Mammary epithelial cell (primary cell): ENCODE measurements at regions of chr11 and their contacts with region 1.

Region 1: DNA sequence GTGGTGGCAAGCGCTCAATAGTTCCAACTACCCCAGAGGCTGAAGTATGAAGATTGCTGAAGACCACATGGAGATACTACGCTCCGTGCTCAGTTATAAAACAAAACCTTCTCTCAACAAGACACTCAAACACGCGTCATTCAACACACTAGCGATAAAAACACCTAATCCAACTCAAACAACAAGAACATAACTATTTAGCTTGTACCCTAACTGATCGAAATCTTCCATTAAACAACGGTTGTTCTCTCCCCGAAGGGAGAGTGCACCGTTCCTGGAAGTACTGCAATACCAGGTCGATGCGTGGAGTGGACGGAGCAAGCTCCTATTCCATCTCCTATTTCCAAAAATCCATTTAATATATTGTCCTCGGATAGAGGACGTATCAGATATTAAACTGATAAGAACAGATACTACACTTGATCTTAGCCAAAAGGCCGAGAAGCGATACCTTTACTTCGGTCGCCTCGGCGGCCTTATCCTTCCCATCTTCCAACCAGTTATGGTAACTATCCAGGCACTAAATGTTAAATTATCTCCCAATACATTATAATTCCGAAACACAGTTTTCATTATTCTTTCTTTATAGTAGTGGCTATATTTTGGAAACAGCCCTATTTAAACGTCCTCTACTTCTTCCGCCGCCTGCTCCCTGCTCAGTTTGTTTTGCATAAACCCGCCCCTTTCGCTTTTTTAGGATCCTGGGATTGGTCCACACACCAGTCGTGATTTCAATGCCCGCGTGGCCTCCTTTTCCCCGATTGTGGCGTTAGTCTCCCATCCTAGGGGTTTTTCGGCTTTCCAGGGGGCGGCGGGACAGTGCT is 2.2 kb upstream of the WDR74 start:
- DNase-seq: peak; percentile 100
- H3K4me3 ChIP-seq: peak overlapping the region in 2 of 3 experiments; percentile 35 to 36
- H3K27ac ChIP-seq: peak overlapping the region; percentile 99
- H3K4me1 ChIP-seq: peaks cover 11% of the 10 kb centered on the region
- H3K27me3 ChIP-seq: no peaks in the 10 kb centered on the region
- CTCF ChIP-seq: no peak

Region 2: DNA sequence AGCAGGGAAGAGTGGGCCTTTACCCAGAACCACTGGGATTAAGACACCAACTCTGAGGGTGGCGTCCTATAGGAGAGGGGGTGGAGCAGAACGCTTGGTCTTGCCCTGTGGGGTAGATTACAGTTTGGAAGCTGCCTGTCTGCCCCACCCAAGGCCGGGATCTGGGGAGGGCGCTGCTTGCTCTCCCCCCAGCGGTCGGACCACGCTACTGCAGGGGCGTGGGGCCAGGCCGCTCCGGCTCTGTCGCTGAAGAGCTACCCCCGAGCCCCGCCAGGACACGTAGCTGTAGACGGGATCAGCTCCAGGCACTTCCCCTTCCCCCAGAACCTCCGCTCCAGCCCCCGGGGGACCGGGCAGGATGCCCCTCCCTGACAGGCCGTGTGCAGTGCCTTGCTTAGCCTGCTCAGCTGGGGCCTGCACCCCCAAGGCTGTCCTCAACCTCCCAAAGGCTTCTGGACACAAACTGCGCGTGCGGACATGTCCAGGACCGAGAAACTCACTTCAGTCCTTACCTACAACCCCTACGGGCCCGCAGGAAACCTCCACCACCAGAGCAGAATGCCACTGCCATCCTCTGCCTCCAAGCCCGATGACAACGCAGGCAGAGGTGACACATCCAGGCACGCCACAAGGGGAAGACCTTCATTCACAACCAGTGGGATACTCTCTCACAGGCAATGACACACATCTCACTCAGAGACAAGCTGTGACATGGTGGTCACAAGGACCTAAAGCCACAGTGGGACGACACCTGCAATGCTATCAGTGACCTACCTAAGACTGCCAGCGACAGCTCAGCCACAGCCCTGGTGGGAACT is 298.6 kb before region 1 on chr11:
- CTCF ChIA-PET with region 1: no interaction called
- dilution Hi-C with region 1: no loop called
- in situ Hi-C with region 1: no loop called
- intact Hi-C with region 1: loop called (anchors 2 kb)
- DNase-seq: peak; percentile 78
- H3K4me3 ChIP-seq: peak overlapping the region; percentile 82 to 99 (median 91)
- H3K27ac ChIP-seq: peak overlapping the region; percentile 86
- H3K4me1 ChIP-seq: peaks cover 59% of the 10 kb centered on the region
- H3K27me3 ChIP-seq: no peaks in the 10 kb centered on the region
- CTCF ChIP-seq: peak; percentile 78 to 98

Region 3: GRCh38 chr11:62726915-62727763 is 114.4 kb before region 1 on chr11 and contains the start of gene HNRNPUL2:
- CTCF ChIA-PET with region 1: no interaction called
- dilution Hi-C with region 1: no loop called
- in situ Hi-C with region 1: no loop called
- intact Hi-C with region 1: loop called (anchors 2 kb)
- DNase-seq: peak; percentile 99
- H3K4me3 ChIP-seq: peak within 1 kb of the TSS; percentile 89 to 96 (median 90)
- H3K27ac ChIP-seq: peak within 1 kb of the TSS; percentile 82
- H3K4me1 ChIP-seq: peaks cover 4% of the 10 kb centered on the region
- H3K27me3 ChIP-seq: no peaks in the 10 kb centered on the region
- CTCF ChIP-seq: no peak
- total RNA-seq, gene HNRNPUL2: 7.7 to 50.4 TPM

Region 4: DNA sequence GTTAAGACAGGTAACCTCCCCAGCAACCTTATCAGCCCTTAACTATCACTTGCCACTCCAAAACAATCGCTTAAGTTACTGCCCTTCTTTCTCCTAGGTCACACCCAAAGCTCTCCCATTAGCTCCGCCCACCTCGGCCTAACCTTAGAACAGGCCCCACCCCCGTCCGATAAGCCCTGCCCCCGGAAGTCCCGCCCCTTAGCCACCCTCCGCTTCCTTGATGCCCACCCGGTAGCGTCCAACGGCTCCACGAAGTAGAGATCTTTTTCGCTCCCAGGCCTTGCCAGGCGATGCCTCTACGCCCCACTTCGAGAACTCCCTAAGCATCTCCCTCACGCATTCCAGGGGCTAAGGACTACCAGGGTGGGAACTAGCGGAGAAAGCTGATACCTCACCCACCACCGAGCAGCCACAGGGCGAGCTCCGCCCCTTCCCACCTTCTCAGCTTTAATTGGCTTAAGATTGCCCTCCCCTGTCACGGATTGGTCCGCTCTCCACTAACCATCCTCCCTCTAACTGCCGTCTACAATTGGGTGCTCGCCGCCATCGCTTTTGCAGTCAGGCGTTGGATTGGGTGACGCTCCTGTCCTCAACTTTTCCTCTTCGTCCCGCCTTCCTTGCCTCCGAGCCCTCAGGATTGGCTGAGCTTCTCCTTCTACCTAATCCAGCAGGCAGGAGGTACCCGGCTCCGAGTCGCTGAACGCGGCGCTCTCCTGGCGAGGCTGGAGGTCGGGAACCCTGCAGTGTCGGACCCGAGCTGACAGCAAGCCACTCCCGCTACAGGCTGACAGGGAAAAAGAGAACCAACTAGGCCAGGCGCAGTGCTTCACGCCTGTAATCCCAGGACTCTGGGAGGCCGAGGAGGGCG is 87.6 kb before region 1 on chr11 and contains the start of gene ZBTB3:
- CTCF ChIA-PET with region 1: no interaction called
- dilution Hi-C with region 1: no loop called
- in situ Hi-C with region 1: no loop called
- intact Hi-C with region 1: loop called (anchors 1 kb)
- DNase-seq: peak; percentile 99
- H3K4me3 ChIP-seq: peak within 1 kb of the TSS; percentile 67 to 86 (median 71)
- H3K27ac ChIP-seq: peak within 1 kb of the TSS; percentile 70
- H3K4me1 ChIP-seq: peaks cover 4% of the 10 kb centered on the region
- H3K27me3 ChIP-seq: no peaks in the 10 kb centered on the region
- CTCF ChIP-seq: no peak
- total RNA-seq, gene ZBTB3: 6.5 to 16.0 TPM

Region 5: DNA sequence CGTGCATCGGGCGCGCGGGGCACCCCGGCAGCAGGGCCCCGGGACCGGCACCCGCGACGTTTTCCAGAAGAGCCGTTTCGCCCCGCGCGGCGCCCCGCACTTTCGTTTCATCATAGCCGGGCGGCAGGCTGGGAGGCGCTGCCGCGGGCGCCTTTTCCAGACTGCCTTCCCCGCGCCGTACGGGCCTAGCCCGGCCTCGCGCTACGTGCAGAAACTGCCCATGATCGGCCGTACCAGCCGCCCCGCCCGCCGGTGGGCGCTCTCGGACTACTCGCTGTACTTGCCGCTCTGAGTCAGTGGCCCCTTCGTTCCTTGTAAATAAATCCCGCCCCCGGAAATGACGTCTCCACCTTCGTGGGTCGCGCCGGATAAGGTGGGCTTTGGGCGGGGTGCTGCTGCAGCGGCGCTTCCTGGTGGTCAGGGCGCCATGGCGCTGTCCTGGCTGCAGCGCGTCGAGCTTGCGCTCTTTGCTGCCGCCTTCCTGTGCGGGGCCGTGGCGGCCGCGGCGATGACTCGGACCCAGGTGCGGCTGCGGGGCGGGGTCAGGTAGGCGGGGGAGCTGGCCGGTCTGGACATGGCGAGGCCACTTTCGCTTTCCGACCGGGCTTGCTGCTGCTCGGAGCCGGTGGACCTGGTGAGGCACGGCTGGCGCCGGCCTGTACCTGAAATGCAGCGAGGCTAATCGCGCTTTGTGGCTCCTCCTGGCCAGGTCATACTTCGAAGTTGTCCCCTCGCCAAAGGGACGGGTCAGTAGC is 54.4 kb before region 1 on chr11 and contains the start of gene TMEM179B:
- CTCF ChIA-PET with region 1: no interaction called
- dilution Hi-C with region 1: no loop called
- in situ Hi-C with region 1: no loop called
- intact Hi-C with region 1: loop called (anchors 1 kb)
- DNase-seq: peak; percentile 98
- H3K4me3 ChIP-seq: peak within 1 kb of the TSS; percentile 43 to 95 (median 67)
- H3K27ac ChIP-seq: peak within 1 kb of the TSS; percentile 70
- H3K4me1 ChIP-seq: peaks cover 21% of the 10 kb centered on the region
- H3K27me3 ChIP-seq: no peaks in the 10 kb centered on the region
- CTCF ChIP-seq: peak; percentile 52 to 71
- total RNA-seq, gene TMEM179B: 20.5 to 26.9 TPM

Region 6: GRCh38 chr11:62855571-62856332 is 14.2 kb after region 1 on chr11:
- CTCF ChIA-PET with region 1: interaction called, 6 read pairs
- dilution Hi-C with region 1: no loop called
- in situ Hi-C with region 1: no loop called
- intact Hi-C with region 1: loop called (anchors 1 kb)
- DNase-seq: peak; percentile 98
- H3K4me3 ChIP-seq: peak overlapping the region; percentile 74 to 86 (median 84)
- H3K27ac ChIP-seq: peak overlapping the region; percentile 77
- H3K4me1 ChIP-seq: peaks cover 19% of the 10 kb centered on the region
- H3K27me3 ChIP-seq: no peaks in the 10 kb centered on the region
- CTCF ChIP-seq: no peak